ENCODE measurements at regions of chr2 and their contacts with region 1.

Region 1: GRCh38 chr2:233053928-233054784 is 6.0 kb upstream of the INPP5D start:
- DNase-seq: peak; percentile 77
- H3K4me3 Mint-ChIP-seq: no peak overlapping the region
- H3K27ac Mint-ChIP-seq: no peak overlapping the region
- H3K4me1 Mint-ChIP-seq: peaks cover 14% of the 10 kb centered on the region
- H3K27me3 Mint-ChIP-seq: peaks cover 38% of the 10 kb centered on the region

Region 2: DNA sequence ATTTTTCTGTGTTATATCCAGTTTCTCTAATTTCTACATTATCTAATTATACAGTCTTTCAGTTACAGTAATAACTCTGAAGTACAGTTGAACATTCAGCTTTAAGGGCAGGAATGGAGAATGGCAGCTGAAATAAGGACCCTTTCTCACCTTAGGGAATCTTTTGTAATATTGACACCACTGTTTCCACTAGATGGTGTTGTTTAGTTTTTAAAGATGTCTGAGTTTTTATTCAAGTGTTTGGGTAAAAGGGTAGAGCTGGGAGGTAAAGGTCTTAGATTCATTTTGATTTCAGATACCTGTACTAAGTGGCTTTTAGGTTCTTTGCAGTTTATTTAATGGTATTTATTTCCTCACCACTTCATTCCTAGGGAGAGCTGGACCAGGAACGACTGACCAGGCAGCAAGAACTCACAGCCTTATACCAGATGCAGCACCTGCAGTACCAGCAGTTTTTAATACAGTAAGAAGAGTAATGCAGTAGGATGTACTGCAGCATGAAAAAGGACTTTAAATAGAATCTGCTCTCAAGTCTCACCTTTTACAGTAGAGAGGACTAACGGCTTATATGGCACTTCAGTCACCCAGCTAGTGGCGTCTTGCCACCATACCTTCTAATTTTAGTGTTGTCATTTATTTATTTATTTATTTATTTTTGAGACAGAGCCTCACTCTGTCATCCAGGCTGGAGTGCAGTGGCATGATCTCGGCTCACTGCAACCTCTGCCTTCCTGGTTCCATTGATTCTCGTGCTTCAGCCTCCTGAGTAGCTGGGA is 244.6 kb before region 1 on chr2:
- CTCF ChIA-PET with region 1: interaction called, 13 read pairs
- DNase-seq: no peak
- H3K4me3 Mint-ChIP-seq: no peak overlapping the region
- H3K27ac Mint-ChIP-seq: no peak overlapping the region
- H3K4me1 Mint-ChIP-seq: no peaks in the 10 kb centered on the region
- H3K27me3 Mint-ChIP-seq: no peaks in the 10 kb centered on the region

Region 3: GRCh38 chr2:233075966-233076339 is 21.8 kb after region 1 on chr2:
- CTCF ChIA-PET with region 1: interaction called, 55 read pairs
- DNase-seq: peak; percentile 62
- H3K4me3 Mint-ChIP-seq: no peak overlapping the region
- H3K27ac Mint-ChIP-seq: no peak overlapping the region
- H3K4me1 Mint-ChIP-seq: peaks cover 36% of the 10 kb centered on the region
- H3K27me3 Mint-ChIP-seq: no peaks in the 10 kb centered on the region

Region 4: DNA sequence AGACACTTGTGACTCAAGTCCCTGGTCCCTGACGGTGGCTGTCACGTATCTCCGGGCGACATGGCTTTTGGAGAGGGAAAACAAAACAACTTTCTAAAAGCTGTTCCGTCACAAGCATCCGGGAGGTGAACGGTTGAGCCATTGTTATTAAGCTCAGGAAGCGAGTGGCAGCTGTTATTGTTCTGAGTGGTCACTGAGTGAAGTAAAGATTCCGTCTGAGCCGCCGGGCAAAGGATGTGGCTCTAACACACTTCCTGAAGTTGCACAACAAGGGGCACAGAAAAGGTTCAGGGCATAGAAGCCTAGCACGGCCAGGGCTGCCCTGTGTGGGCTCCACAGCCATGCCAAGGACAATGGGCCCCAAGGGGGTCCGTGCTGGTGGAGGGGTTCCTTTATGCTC is 30.3 kb after region 1 on chr2:
- CTCF ChIA-PET with region 1: interaction called, 55 read pairs
- DNase-seq: peak; percentile 71
- H3K4me3 Mint-ChIP-seq: peak overlapping the region; percentile 69
- H3K27ac Mint-ChIP-seq: peak overlapping the region; percentile 92
- H3K4me1 Mint-ChIP-seq: peaks cover 81% of the 10 kb centered on the region
- H3K27me3 Mint-ChIP-seq: no peaks in the 10 kb centered on the region

Region 5: GRCh38 chr2:233251306-233252116 is 197.4 kb after region 1 on chr2 and contains the start of gene ATG16L1:
- CTCF ChIA-PET with region 1: interaction called, 17 read pairs
- DNase-seq: peak; percentile 97
- H3K4me3 Mint-ChIP-seq: peak within 1 kb of the TSS; percentile 86
- H3K27ac Mint-ChIP-seq: peak within 1 kb of the TSS; percentile 96
- H3K4me1 Mint-ChIP-seq: peaks cover 76% of the 10 kb centered on the region
- H3K27me3 Mint-ChIP-seq: no peaks in the 10 kb centered on the region